GM12878 (cell line): ENCODE measurements at regions of chr5 and their contacts with region 1.

Region 1: DNA sequence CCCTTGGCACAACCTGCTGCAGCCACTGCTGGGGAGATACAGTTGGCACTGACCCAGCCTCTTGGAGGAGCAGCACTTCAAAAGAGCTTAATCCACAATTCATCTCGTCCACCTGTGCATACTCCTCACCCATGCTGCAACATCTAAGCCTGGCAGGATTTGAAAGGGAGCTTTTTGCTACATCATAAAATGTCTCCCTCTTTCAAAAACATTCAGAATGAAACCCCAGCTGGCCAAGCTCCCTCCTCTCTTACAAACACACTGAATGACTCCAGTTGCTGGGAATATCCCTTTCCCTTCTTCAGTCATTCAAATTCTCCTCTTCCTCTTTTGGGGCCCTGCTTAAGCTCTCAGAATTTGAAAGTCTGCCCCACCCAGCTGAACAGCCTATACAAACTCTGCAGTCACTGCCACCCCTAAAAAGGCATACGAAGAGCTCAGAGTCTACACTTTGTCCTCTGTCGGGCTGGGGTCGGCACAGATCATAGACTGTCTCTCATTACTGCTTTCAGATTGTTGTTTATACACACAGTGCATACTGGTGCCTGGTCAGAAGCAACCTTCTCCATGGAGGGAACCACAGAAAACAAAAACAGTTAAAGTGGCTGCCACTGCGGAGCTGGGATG is 8.8 kb upstream of the C5orf15 start:
- DNase-seq: peak; percentile 34
- ATAC-seq: peak; percentile 75
- H3K4me3 ChIP-seq: no peak overlapping the region
- H3K27ac ChIP-seq: peak overlapping the region; percentile 20
- H3K4me1 ChIP-seq: peaks cover 7% of the 10 kb centered on the region
- H3K27me3 ChIP-seq: no peaks in the 10 kb centered on the region
- CTCF ChIP-seq: no peak
- EP300 ChIP-seq: no peak
- POLR2A ChIP-seq: no peak
- RAD21 ChIP-seq: no peak

Region 2: GRCh38 chr5:133952729-133953567 is 24.3 kb before region 1 on chr5:
- CTCF ChIA-PET with region 1: interaction called, 19 read pairs
- POLR2A ChIA-PET with region 1: no interaction called
- RAD21 ChIA-PET with region 1: interaction called, 4 read pairs
- SMC1A ChIA-PET with region 1: interaction called, 8 read pairs
- in situ Hi-C with region 1: no loop called
- intact Hi-C with region 1: no loop called
- DNase-seq: no peak
- ATAC-seq: no peak
- H3K4me3 ChIP-seq: no peak overlapping the region
- H3K27ac ChIP-seq: no peak overlapping the region
- H3K4me1 ChIP-seq: peaks cover 9% of the 10 kb centered on the region
- H3K27me3 ChIP-seq: no peaks in the 10 kb centered on the region
- CTCF ChIP-seq: no peak
- EP300 ChIP-seq: no peak
- POLR2A ChIP-seq: no peak
- RAD21 ChIP-seq: no peak

Region 3: DNA sequence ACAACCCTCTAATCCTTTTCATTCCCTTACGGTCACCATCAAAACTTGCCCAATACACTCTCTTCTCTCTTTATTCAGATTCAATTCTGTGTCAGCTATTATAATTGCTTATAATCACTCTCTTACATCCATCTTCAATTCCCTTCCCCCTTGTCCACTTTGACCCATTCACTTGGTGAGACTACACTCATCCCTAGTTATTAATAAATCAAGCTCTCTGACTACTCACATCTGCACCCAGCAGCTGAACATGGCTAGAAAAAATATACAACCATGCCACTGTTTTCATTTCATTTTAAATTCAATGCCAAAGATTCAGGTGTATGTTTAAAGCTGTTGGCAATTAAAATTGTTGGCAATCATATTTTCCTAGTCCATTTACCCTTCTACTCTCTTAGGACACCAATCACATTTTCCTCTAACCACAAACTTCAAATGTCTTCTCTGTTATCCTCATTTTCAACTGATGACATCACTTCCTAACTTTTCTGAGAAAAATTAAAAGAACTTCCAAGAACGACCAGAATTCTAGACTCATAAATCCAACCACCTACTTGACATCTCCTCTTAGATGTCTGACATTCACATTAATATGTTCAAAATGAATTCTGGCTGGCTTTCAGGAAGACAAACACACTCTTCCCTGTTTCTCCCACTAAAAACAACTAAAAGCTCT is 14.3 kb before region 1 on chr5:
- CTCF ChIA-PET with region 1: interaction called, 23 read pairs
- POLR2A ChIA-PET with region 1: interaction called, 5 read pairs
- RAD21 ChIA-PET with region 1: interaction called, 3 read pairs
- SMC1A ChIA-PET with region 1: interaction called, 6 read pairs
- in situ Hi-C with region 1: no loop called
- intact Hi-C with region 1: no loop called
- DNase-seq: no peak
- ATAC-seq: no peak
- H3K4me3 ChIP-seq: no peak overlapping the region
- H3K27ac ChIP-seq: no peak overlapping the region
- H3K4me1 ChIP-seq: peaks cover 4% of the 10 kb centered on the region
- H3K27me3 ChIP-seq: no peaks in the 10 kb centered on the region
- CTCF ChIP-seq: no peak
- EP300 ChIP-seq: no peak
- POLR2A ChIP-seq: no peak
- RAD21 ChIP-seq: no peak

Region 4: GRCh38 chr5:133996683-133997252 is 19.5 kb after region 1 on chr5:
- CTCF ChIA-PET with region 1: interaction called, 179 read pairs
- POLR2A ChIA-PET with region 1: interaction called, 4 read pairs
- RAD21 ChIA-PET with region 1: interaction called, 3 read pairs
- SMC1A ChIA-PET with region 1: interaction called, 9 read pairs
- in situ Hi-C with region 1: no loop called
- intact Hi-C with region 1: no loop called
- DNase-seq: no peak
- ATAC-seq: peak; percentile 53
- H3K4me3 ChIP-seq: peak overlapping the region; percentile 38; the same call in 1 of the 2 replicates
- H3K27ac ChIP-seq: no peak overlapping the region
- H3K4me1 ChIP-seq: peaks cover 25% of the 10 kb centered on the region
- H3K27me3 ChIP-seq: no peaks in the 10 kb centered on the region
- CTCF ChIP-seq: peak; percentile 67 to 72 (median 68)
- EP300 ChIP-seq: no peak
- POLR2A ChIP-seq: no peak
- RAD21 ChIP-seq: peak; percentile 33

Region 5: GRCh38 chr5:134004592-134005375 is 27.5 kb after region 1 on chr5 and contains the start of gene VDAC1:
- CTCF ChIA-PET with region 1: interaction called, 179 read pairs
- POLR2A ChIA-PET with region 1: interaction called, 8 read pairs
- RAD21 ChIA-PET with region 1: interaction called, 3 read pairs
- SMC1A ChIA-PET with region 1: interaction called, 12 read pairs
- in situ Hi-C with region 1: no loop called
- intact Hi-C with region 1: no loop called
- DNase-seq: no peak
- ATAC-seq: peak; percentile 86
- H3K4me3 ChIP-seq: peak within 1 kb of the TSS; percentile 88
- H3K27ac ChIP-seq: peak within 1 kb of the TSS; percentile 95
- H3K4me1 ChIP-seq: peaks cover 19% of the 10 kb centered on the region
- H3K27me3 ChIP-seq: no peaks in the 10 kb centered on the region
- CTCF ChIP-seq: 0 out of 6 replicates have a peak, but pooled peaks of 1 of the 3 experiments have one; percentile 2
- EP300 ChIP-seq: no peak
- POLR2A ChIP-seq: peak; percentile 87
- RAD21 ChIP-seq: no peak
- polyA plus RNA-seq, gene VDAC1: 276 to 376 TPM

Region 6: GRCh38 chr5:134125039-134126015 is 148.1 kb after region 1 on chr5:
- CTCF ChIA-PET with region 1: no interaction called
- POLR2A ChIA-PET with region 1: no interaction called
- RAD21 ChIA-PET with region 1: no interaction called
- SMC1A ChIA-PET with region 1: no interaction called
- in situ Hi-C with region 1: no loop called
- intact Hi-C with region 1: no loop called
- DNase-seq: no peak
- ATAC-seq: peak; percentile 41
- H3K4me3 ChIP-seq: no peak overlapping the region
- H3K27ac ChIP-seq: peak overlapping the region; percentile 47
- H3K4me1 ChIP-seq: peaks cover 64% of the 10 kb centered on the region
- H3K27me3 ChIP-seq: no peaks in the 10 kb centered on the region
- CTCF ChIP-seq: no peak
- EP300 ChIP-seq: 0 out of 4 replicates have a peak, but pooled peaks of 1 of the 2 experiments have one; percentile 11
- POLR2A ChIP-seq: no peak
- RAD21 ChIP-seq: no peak